ENCODE measurements at regions of chr6 and their contacts with region 1.

Region 1: GRCh38 chr6:136550330-136551071 is at the start of gene MAP7:
- DNase-seq: peak; percentile 82 to 93 (median 88)
- ATAC-seq: peak; percentile 90
- H3K4me3 ChIP-seq: peak within 1 kb of the TSS; percentile 64
- H3K27ac ChIP-seq: peak within 1 kb of the TSS; percentile 28; the same call in 1 of the 3 replicates
- H3K4me1 ChIP-seq: peaks cover 13 to 17% of the 10 kb centered on the region in 2 experiments
- H3K27me3 ChIP-seq: peaks cover 7 to 8% of the 10 kb centered on the region in 2 experiments; a peak in 3 of 5 replicates
- CTCF ChIP-seq: peak; percentile 78 to 95 (median 92)
- EP300 ChIP-seq: no peak
- POLR2A ChIP-seq: no peak
- RAD21 ChIP-seq: peak; percentile 90 to 91
- polyA plus RNA-seq, gene MAP7: 0.76 to 1.1 TPM

Region 2: GRCh38 chr6:136341967-136342366 is 208.5 kb before region 1 on chr6:
- CTCF ChIA-PET with region 1: interaction called, 8 read pairs
- POLR2A ChIA-PET with region 1: interaction called, 3 read pairs
- in situ Hi-C with region 1: loop called (anchors 25 kb)
- intact Hi-C with region 1: loop called (anchors 1 kb)
- DNase-seq: peak in 2 of 4 experiments; percentile 36 to 72
- ATAC-seq: peak; percentile 84
- H3K4me3 ChIP-seq: no peak overlapping the region
- H3K27ac ChIP-seq: no peak overlapping the region
- H3K4me1 ChIP-seq: no peaks in the 10 kb centered on the region
- H3K27me3 ChIP-seq: peaks cover 0 to 3% of the 10 kb centered on the region in 2 experiments; a peak in 2 of 5 replicates
- CTCF ChIP-seq: peak; percentile 45 to 75 (median 47); a peak in 4 of 6 replicates
- EP300 ChIP-seq: no peak
- POLR2A ChIP-seq: no peak
- RAD21 ChIP-seq: peak; percentile 87 to 94

Region 3: DNA sequence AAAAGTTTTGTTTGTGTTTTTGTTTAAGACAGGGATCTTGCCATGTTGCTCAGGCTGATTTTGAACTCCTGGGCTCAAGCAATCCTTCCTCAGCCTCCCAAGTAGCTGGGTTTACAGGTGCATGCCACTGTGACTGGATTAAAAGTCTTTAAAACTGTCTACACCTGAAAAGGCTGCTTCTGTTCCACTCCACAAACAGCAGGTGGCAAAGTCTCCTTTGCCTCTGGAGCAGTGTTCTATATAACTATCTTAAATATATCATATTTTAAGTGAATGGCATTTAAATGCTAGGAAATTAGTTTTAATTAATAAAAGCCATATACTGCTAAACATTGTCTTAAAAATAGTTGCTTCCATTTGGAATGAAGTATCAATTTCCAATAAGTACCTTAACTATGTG is 171.6 kb before region 1 on chr6:
- CTCF ChIA-PET with region 1: interaction called, 3 read pairs
- POLR2A ChIA-PET with region 1: no interaction called
- in situ Hi-C with region 1: no loop called
- intact Hi-C with region 1: loop called (anchors 1 kb)
- DNase-seq: peak in 1 of 4 experiments; percentile 36
- ATAC-seq: peak; percentile 76
- H3K4me3 ChIP-seq: no peak overlapping the region
- H3K27ac ChIP-seq: no peak overlapping the region
- H3K4me1 ChIP-seq: no peaks in the 10 kb centered on the region
- H3K27me3 ChIP-seq: peaks cover 2 to 6% of the 10 kb centered on the region in 2 experiments; a peak in 3 of 5 replicates
- CTCF ChIP-seq: peak in 2 of 3 experiments; percentile 31 to 50; a peak in 2 of 6 replicates
- EP300 ChIP-seq: no peak
- POLR2A ChIP-seq: no peak
- RAD21 ChIP-seq: peak; percentile 89 to 90

Region 4: DNA sequence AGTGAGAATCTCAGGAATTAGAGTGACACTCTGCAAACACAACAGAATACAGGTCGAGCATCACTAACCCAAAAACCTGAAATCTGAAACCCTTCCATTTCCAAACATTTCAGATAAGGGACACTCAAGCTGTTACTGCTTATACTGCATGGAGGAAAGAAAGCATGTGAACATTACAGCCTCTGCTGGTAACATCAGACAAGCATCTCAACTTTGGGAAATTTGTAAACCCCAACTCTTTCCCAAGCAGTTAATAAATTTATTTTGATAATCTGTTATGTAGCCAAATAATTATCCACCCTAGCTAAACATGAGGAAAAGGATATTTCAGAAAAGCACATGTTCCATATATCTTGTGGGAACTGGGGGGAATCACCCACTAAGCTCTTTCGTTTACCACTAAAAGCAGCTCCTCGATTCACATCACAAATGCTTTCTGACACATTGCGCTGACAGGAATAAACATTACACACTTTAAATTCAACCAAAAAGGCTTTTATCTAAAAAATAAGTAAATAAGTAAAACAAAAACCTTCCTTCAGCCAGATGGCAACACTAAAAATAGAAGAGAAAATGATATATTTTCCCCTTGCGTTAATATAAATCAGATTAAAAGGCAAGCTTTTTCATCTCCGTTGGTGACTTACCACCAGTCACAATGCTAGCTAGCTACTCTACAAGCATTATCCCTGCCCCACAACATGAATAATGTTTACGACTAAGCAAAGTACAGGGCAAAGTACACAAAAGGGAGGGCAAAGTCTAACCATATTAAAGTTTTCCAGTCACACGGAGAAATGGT is 121.0 kb before region 1 on chr6:
- CTCF ChIA-PET with region 1: no interaction called
- POLR2A ChIA-PET with region 1: no interaction called
- in situ Hi-C with region 1: no loop called
- intact Hi-C with region 1: loop called (anchors 5 kb)
- DNase-seq: peak in 1 of 4 experiments; percentile 44
- ATAC-seq: peak; percentile 42; the same call in 2 of the 3 replicates
- H3K4me3 ChIP-seq: no peak overlapping the region
- H3K27ac ChIP-seq: no peak overlapping the region
- H3K4me1 ChIP-seq: peaks cover 0 to 40% of the 10 kb centered on the region in 2 experiments; a peak in 4 of 5 replicates
- H3K27me3 ChIP-seq: peaks cover 0 to 4% of the 10 kb centered on the region in 2 experiments; a peak in 2 of 5 replicates
- CTCF ChIP-seq: no peak
- EP300 ChIP-seq: no peak
- POLR2A ChIP-seq: no peak
- RAD21 ChIP-seq: peak; percentile 46 to 72

Measured in K562 (cell line).